Sigmoid colon (tissue), 7 donors: ENCODE measurements at regions of chr6 and their contacts with region 1.

Region 1: GRCh38 chr6:41779793-41780545 is at the start of gene FRS3:
- DNase-seq: peak; percentile 99
- H3K4me3 ChIP-seq: peak within 1 kb of the TSS; percentile 57 to 79 (median 74)
- H3K27ac ChIP-seq: peak within 1 kb of the TSS; percentile 84 to 89 (median 86)
- H3K4me1 ChIP-seq: peaks cover 0 to 33% (median 24%) of the 10 kb centered on the region in 4 donors
- H3K27me3 ChIP-seq: no peaks in the 10 kb centered on the region
- CTCF ChIP-seq: peak; percentile 80 to 93 (median 88)
- EP300 ChIP-seq: no peak
- POLR2A ChIP-seq: no peak
- total RNA-seq, gene FRS3: 4.1 to 4.9 (median 4.7) TPM

Region 2: GRCh38 chr6:41602864-41603608 is 176.9 kb before region 1 on chr6:
- intact Hi-C with region 1: loop called (anchors 5 kb)
- DNase-seq: peak; percentile 91
- H3K4me3 ChIP-seq: peak overlapping the region in 3 of 4 donors; percentile 6 to 33 (median 10)
- H3K27ac ChIP-seq: peak overlapping the region; percentile 18 to 81 (median 66)
- H3K4me1 ChIP-seq: peaks cover 0 to 21% (median 15%) of the 10 kb centered on the region in 4 donors
- H3K27me3 ChIP-seq: no peaks in the 10 kb centered on the region
- CTCF ChIP-seq: peak; percentile 81 to 92 (median 86)
- EP300 ChIP-seq: no peak
- POLR2A ChIP-seq: no peak

Region 3: GRCh38 chr6:41735427-41736356 is 44.3 kb before region 1 on chr6 and contains the start of gene TFEB:
- intact Hi-C with region 1: loop called (anchors 2 kb)
- DNase-seq: peak; percentile 97
- H3K4me3 ChIP-seq: peak within 1 kb of the TSS; percentile 71 to 95 (median 88)
- H3K27ac ChIP-seq: peak within 1 kb of the TSS; percentile 96 to 98 (median 97)
- H3K4me1 ChIP-seq: peaks cover 0 to 40% (median 31%) of the 10 kb centered on the region in 4 donors
- H3K27me3 ChIP-seq: no peaks in the 10 kb centered on the region
- CTCF ChIP-seq: peak; percentile 66 to 79 (median 72)
- EP300 ChIP-seq: no peak
- POLR2A ChIP-seq: no peak
- total RNA-seq, gene TFEB: 21.0 to 28.5 (median 24.2) TPM

Region 4: DNA sequence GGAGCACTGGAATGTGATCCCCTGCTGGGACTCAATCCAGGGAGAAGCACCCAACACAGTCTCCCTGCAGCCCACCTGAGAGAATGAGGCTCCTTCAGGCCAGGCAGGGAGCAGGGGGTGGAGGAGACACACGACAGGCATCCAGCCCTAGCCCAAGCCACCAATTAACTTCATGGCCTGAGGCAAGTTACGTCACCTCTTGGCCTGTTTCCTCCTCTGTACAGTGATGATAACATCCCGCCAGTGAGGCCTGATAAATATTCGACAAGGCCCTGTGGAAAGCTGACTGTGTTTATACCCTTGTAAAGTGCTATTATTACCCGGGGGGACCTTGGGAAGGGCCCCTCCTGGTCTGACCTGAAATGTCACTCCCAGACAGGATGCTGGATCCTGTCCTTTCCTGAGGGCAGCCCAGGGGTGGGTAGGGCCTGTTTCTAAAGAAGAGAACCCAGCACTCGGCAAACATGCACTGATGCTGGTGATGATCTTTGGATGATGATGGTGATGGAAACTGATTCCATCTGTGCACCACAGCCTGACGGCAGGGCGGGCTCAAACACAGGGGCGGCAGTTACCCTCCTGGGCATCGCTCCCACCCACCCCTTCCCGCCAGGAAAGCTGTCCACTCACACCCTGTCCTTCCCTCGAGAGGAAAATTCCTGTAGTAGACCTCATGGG is 12.7 kb before region 1 on chr6:
- intact Hi-C with region 1: no loop called
- DNase-seq: peak; percentile 74
- H3K4me3 ChIP-seq: no peak overlapping the region
- H3K27ac ChIP-seq: peak overlapping the region; percentile 14 to 53 (median 50)
- H3K4me1 ChIP-seq: peaks cover 0 to 10% (median 7%) of the 10 kb centered on the region in 4 donors
- H3K27me3 ChIP-seq: no peaks in the 10 kb centered on the region
- CTCF ChIP-seq: no peak
- EP300 ChIP-seq: no peak
- POLR2A ChIP-seq: no peak

Region 5: DNA sequence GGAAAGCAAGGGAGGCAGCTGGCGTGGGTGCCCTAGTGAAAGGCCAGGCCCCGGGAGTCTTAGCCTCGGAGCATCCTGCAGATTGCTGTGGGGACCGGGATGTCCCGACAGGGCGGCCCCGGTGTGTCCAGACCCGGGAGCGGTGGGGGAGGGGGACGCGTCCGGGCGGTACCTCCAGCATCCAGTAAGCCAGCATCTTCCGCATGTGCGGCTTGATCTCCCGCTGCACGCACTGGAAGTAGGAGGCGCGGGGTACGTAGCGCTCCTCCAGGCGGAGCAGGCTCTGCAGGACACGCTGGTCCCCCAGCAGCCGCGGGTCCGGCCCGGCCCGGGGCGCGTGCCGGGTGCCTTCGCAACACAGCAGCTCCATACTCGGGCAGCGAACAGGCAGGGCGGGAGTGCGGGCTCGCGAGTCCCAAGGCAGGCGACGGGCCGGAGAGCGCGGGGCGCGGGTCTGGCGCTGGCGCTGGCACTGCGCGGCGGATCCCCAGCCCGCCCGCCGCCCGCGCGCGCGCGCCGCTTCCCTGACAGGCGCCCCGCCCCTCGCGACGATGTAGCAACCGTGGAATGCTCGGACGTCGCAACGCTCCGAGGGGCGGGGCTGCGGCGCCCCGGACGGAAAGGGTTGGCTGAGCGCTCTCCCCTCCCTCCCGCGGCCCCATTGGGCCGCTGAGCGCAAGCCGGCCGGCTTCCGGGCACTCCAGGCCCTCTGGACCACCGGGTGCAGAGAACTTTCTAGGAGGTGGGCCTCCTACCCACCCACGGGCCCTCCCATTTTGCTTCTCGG is 161.5 kb after region 1 on chr6 and contains the start of gene CCND3:
- intact Hi-C with region 1: loop called (anchors 5 kb)
- DNase-seq: peak; percentile 94
- H3K4me3 ChIP-seq: peak within 1 kb of the TSS; percentile 56 to 82 (median 66)
- H3K27ac ChIP-seq: peak within 1 kb of the TSS; percentile 86 to 94 (median 89)
- H3K4me1 ChIP-seq: peaks cover 0 to 53% (median 48%) of the 10 kb centered on the region in 4 donors
- H3K27me3 ChIP-seq: no peaks in the 10 kb centered on the region
- CTCF ChIP-seq: no peak
- EP300 ChIP-seq: no peak
- POLR2A ChIP-seq: no peak
- total RNA-seq, gene CCND3: 75.1 to 125 (median 110) TPM

Region 6: GRCh38 chr6:42217519-42218367 is 437.8 kb after region 1 on chr6 and contains the start of gene MRPS10:
- intact Hi-C with region 1: loop called (anchors 5 kb)
- DNase-seq: peak; percentile 96
- H3K4me3 ChIP-seq: peak within 1 kb of the TSS; percentile 60 to 73 (median 72)
- H3K27ac ChIP-seq: peak within 1 kb of the TSS; percentile 78 to 86 (median 82)
- H3K4me1 ChIP-seq: peaks cover 0 to 15% (median 13%) of the 10 kb centered on the region in 4 donors
- H3K27me3 ChIP-seq: no peaks in the 10 kb centered on the region
- CTCF ChIP-seq: no peak
- EP300 ChIP-seq: no peak
- POLR2A ChIP-seq: peak; percentile 86 to 92
- total RNA-seq, gene MRPS10: 27.7 to 35.2 (median 32.8) TPM